ENCODE measurements at regions of chr14 and their contacts with region 1.

Region 1: GRCh38 chr14:76894308-76894892 is 68.2 kb downstream of the LRRC74A start:
- DNase-seq: no peak
- H3K4me3 ChIP-seq: no peak overlapping the region
- CTCF ChIP-seq: no peak

Region 2: DNA sequence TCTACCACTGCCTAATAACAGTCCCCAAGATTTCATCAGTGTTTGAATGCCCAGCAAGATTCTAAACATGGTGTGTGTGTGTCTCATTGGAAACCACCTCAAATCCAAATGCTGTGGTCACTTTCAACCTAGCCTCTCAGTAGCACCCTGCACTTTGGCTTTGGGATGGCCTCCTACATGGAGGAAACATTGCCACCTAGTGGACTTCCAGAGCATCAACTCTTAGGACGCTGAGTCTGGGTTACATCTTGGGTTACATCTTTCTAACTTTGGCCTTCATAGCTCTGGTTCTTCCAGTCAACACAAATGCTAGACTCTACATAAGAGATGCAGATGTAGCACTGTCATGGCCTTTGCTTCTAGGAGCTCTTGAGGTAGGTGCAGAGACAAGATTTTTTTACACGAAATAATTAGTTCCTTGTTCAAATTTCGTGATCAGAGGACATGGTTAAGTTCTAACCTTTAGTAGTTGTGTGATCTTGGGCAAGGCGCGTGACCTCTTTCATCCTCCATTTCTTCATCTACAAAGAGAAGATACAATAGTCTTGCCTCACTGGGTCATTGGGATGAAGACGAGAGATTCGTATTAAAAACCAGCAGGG is 246.6 kb before region 1 on chr14:
- in situ Hi-C with region 1: no loop called
- DNase-seq: peak; percentile 28
- H3K4me3 ChIP-seq: no peak overlapping the region
- CTCF ChIP-seq: peak; percentile 89

Region 3: DNA sequence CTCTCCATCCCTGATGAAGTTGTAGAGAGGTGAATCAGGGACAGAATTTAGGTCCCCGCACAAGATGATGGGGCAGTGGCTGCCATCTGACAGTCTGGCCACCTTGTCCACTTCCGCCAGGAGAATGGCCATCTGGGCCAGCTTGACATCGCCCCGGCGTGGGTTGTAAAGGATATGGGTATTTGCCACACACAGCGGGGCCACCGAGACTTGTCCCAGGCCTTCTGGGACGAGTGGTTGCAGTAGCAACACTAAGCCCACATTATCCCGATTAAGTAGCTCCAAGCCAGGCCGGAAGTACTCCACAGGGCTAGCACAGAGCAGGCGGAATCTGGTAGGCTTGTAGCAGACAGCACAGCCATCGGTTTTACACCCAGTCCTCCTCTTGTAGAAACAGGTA is 88.0 kb before region 1 on chr14:
- in situ Hi-C with region 1: no loop called
- DNase-seq: no peak
- H3K4me3 ChIP-seq: no peak overlapping the region
- CTCF ChIP-seq: no peak

Region 4: DNA sequence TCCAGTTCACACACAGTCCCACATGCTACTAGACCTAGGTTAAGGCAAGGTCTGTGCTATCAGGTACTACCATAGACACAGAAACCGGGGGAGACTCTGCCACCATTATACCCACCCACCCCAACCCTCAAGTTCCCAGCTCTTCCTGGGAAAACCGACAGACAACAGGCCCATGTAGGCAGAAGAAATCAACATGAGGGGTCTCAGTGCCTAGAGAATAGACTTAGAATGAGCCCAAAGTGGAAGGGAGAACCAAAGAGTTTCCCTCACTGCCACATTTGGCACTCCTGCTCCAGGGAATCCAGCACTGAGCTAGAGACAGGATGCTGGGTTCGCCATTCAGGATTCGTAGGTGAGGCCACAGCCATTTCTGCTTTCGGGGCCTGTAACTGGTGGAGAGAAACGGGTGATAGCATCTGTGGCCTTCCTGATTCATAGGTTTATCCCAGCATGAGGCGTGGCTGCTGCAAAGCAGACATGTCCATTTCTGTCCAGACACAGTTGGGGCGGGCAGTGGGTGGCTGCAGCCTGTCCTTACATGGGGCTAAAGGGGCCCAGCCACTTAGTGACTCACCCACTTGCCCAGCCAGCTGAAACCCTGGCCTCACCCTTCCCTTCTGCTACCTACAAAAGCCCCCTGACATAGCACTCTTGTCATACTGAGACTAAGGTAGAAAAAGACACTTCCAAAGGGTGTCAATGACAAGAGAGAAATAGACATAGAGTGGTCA is 64.7 kb after region 1 on chr14:
- in situ Hi-C with region 1: no loop called
- DNase-seq: no peak
- H3K4me3 ChIP-seq: no peak overlapping the region
- CTCF ChIP-seq: no peak

Region 5: GRCh38 chr14:77076113-77076631 is 181.8 kb after region 1 on chr14:
- in situ Hi-C with region 1: loop called (anchors 10 kb)
- DNase-seq: no peak
- H3K4me3 ChIP-seq: no peak overlapping the region
- CTCF ChIP-seq: no peak

Measured in astrocyte of the cerebellum (primary cell).